Astrocyte of the cerebellum (primary cell): ENCODE measurements at regions of chr17 and their contacts with region 1.

Region 1: DNA sequence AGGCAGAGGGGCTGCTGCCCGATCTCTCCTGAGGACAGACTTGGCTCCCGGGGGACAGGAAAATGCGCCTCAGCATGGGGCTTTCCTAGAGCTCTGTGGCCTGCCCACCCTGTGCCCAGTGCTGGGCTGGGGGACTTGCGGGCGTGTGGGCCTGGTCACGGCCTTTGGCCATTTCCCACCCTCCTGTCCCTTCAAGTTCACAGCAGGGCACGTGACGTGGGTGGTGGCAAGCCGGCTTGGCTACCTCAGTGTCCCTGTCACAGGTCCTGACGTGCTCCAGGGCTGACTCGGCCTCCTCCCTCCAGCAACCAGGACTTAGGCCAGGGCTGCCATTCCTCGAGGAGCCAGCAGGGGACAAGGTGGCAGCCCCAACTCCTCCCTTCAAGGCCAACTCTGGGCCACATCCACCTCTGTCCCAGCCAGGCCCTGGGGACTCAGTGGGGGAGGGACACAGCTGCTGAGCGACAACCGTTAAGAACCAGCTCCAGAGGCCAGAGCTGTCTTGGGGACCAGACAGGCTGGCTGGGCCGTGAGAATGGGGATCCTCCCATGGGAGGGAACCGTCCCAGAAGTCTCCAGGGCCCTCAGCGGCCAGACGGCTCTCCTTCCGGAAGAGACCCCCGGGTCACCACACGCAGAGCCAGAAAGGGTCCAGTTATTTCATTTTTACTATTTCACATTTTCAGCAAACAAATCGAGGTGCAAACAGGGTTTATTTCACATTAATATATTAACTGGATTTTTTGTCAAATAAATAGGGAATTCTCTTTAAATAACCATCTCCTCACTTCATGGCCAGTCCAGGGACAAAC is 1.1 kb upstream of the UNC13D start:
- DNase-seq: no peak
- H3K4me3 ChIP-seq: no peak overlapping the region
- CTCF ChIP-seq: peak; percentile 75

Region 2: DNA sequence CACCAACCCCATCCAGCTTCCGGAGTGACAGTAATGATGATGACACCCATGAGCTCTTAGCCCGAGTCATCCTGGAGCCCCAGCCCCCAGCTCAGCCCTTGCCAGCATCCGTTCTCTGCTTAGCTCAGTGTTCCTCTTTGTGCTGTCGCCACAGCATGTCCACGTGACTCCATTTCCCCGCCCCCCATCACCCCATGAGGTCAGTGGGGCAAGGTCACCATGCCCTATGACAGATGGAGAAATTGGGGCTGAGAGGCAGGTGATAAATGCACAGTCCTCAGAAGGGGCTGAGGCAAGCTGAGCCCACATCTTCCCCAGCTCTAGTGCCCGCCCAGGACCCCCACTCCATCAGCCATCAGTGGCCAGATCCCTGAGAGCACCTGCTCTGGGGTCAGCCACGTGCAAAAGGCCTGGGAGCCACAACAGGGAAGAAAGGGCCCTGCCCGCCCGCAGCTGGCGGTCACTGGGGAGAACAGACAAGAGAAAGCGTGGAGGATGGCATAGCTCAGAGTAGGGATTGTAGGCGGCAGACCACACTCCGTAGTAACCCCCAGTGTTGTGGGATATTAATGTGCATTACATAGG is 106.9 kb before region 1 on chr17:
- in situ Hi-C with region 1: no loop called
- DNase-seq: no peak
- H3K4me3 ChIP-seq: no peak overlapping the region
- CTCF ChIP-seq: no peak

Region 3: DNA sequence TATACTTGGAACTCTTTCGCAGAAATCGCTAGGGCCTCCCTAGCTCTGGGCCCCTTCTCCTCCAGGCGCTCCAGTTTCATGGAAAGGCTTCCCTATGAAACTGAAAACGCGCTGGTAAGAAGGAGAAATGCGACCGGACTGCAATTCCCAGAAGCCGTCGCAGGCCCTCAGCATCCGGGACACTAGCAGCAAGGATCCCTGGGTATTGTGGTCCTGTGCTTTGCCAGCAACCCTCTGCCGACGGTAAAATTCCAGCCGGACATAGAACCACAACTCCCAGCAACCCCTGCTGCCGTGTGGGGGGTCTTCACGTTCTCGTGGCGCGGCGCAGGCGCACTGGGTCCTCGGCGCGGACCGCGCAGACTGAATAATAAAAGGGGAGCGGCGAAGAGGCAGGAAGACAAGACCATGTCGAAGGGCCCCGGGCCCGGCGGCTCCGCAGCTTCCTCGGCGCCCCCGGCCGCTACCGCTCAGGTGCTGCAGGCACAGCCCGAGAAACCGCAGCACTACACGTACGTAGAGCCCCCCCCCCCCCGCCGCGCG is 60.7 kb before region 1 on chr17 and contains the start of gene UNK:
- in situ Hi-C with region 1: loop called (anchors 10 kb)
- DNase-seq: peak; percentile 99
- H3K4me3 ChIP-seq: peak within 1 kb of the TSS; percentile 62
- CTCF ChIP-seq: no peak